ENCODE measurements at regions of chr4 and their contacts with region 1.

Region 1: GRCh38 chr4:23857367-23857959 is 32.4 kb downstream of the PPARGC1A start:
- DNase-seq: no peak
- H3K4me3 ChIP-seq: peak overlapping the region in 1 of 59 donors; percentile 10
- H3K27ac ChIP-seq: peak overlapping the region in 3 of 59 donors; percentile 14 to 58 (median 21)
- H3K27me3 ChIP-seq: no peaks in the 10 kb centered on the region
- CTCF ChIP-seq: peak in 54 of 56 donors; percentile 24 to 77 (median 57)

Region 2: DNA sequence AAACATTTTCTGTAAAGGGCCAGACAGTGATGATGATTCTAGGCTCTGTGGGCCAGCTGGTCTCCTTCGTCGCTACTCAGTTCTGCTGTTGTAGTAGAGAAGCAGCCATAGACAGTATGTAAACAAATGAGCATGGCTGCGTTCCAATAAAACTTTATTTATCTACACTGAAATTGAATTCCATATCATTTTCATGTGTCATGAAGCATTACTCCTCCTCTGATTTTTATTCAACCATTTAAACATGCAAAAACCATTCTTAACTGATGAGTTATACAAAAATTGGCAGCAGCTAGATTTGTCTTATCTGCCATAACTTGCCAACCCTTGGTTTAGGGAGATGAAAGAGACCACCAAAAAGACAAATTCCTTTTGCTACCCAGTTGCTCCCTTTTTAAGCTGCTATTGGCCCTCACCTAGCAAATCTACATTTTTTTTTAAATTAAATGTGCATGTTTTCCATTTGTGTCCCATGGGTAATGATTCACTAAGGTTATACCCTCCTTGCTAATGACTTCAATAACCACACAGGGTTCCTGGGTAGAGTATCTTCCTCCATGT is 417.0 kb after region 1 on chr4:
- intact Hi-C with region 1: no loop called
- DNase-seq: no peak
- H3K4me3 ChIP-seq: no peak overlapping the region
- H3K27ac ChIP-seq: no peak overlapping the region
- H3K27me3 ChIP-seq: no peaks in the 10 kb centered on the region
- CTCF ChIP-seq: no peak

Region 3: DNA sequence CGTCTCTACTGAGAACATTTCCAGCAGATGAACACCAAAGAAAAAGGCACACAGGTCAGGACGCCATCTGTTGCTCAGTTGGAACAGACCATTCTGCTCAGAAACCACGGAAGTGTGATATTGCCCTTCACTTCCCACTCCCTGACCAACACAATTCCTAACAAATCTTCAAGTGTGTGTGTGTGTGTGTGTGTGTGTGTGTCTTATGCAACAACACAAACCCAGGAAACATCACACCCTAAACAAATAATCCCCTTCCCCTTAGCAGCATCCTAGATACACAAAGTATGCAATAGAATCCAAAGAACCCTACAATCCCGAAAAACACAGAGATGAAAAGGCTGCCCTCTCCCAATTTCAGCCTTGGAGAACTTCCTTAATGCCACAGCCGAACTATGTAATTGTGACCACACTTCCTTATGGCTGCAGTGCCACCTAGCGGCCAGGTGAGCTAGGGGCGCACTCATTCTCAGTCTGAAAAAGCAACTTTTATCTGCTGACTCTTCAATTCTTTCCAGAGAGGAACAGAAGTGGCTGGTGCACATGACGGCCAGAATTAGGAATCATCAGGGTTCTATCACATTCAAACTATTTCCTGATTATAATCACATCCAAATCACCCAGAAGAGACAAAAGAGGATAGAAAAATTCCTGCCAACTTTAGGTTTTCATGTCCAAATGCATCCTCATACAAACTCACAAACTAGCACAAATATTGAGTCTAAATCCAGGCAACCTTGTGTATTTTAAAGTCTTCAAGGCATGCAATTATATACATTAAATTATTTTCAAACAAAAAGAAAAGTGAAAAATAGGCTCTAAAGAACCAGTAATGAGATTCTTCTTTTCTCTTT is 561.9 kb after region 1 on chr4:
- intact Hi-C with region 1: loop called in 1 of 2 experiments (anchors 2 kb)
- DNase-seq: peak in 9 of 10 donors; percentile 57 to 71 (median 63)
- H3K4me3 ChIP-seq: no peak overlapping the region
- H3K27ac ChIP-seq: no peak overlapping the region
- H3K27me3 ChIP-seq: no peaks in the 10 kb centered on the region
- CTCF ChIP-seq: peak; percentile 75 to 95 (median 87)